Thyroid gland (tissue), 4 donors: ENCODE measurements at regions of chr10 and their contacts with region 1.

Region 1: GRCh38 chr10:102151774-102152544 is at the start of gene NOLC1:
- DNase-seq: peak; percentile 99
- H3K4me3 ChIP-seq: peak within 1 kb of the TSS; percentile 43 to 91 (median 54)
- H3K27ac ChIP-seq: peak within 1 kb of the TSS; percentile 61 to 62 (median 61)
- H3K4me1 ChIP-seq: peaks cover 10 to 20% of the 10 kb centered on the region in 2 donors
- H3K27me3 ChIP-seq: no peaks in the 10 kb centered on the region
- CTCF ChIP-seq: no peak
- POLR2A ChIP-seq: peak in 1 of 2 donors; percentile 65
- total RNA-seq, gene NOLC1: 52.7 to 80.8 (median 65.1) TPM

Region 2: GRCh38 chr10:102114861-102115618 is 36.9 kb before region 1 on chr10:
- intact Hi-C with region 1: loop called (anchors 5 kb)
- DNase-seq: peak; percentile 92
- H3K4me3 ChIP-seq: peak overlapping the region in 1 of 3 donors; percentile 61
- H3K27ac ChIP-seq: peak overlapping the region; percentile 41 to 61 (median 41)
- H3K4me1 ChIP-seq: peaks cover 55 to 59% of the 10 kb centered on the region in 2 donors
- H3K27me3 ChIP-seq: no peaks in the 10 kb centered on the region
- CTCF ChIP-seq: no peak
- POLR2A ChIP-seq: peak in 1 of 2 donors; percentile 62

Region 3: GRCh38 chr10:102503281-102504220 is 351.6 kb after region 1 on chr10 and contains the start of gene SUFU:
- intact Hi-C with region 1: loop called (anchors 10 kb)
- DNase-seq: peak; percentile 98
- H3K4me3 ChIP-seq: peak within 1 kb of the TSS; percentile 49 to 92 (median 55)
- H3K27ac ChIP-seq: peak within 1 kb of the TSS in 2 of 3 donors; percentile 33 to 84
- H3K4me1 ChIP-seq: peaks cover 34 to 35% of the 10 kb centered on the region in 2 donors
- H3K27me3 ChIP-seq: no peaks in the 10 kb centered on the region
- CTCF ChIP-seq: peak; percentile 82 to 94 (median 90)
- POLR2A ChIP-seq: peak in 1 of 2 donors; percentile 69
- total RNA-seq, gene SUFU: 2.3 to 5.4 (median 4.4) TPM